ENCODE measurements at regions of chr6 and their contacts with region 1.

Region 1: GRCh38 chr6:25070547-25071366 is 135.0 kb upstream of the RIPOR2 start:
- DNase-seq: peak; percentile 85
- ATAC-seq: peak; percentile 88
- H3K4me3 ChIP-seq: peak overlapping the region; percentile 34; the same call in 1 of the 2 replicates
- H3K27ac ChIP-seq: no peak overlapping the region
- H3K4me1 ChIP-seq: peaks cover 9% of the 10 kb centered on the region; the same call in 1 of the 2 replicates
- H3K27me3 ChIP-seq: no peaks in the 10 kb centered on the region
- CTCF ChIP-seq: peak; percentile 93

Region 2: GRCh38 chr6:24774696-24775519 is 295.8 kb before region 1 on chr6 and contains the start of gene GMNN:
- CTCF ChIA-PET with region 1: no interaction called
- POLR2A ChIA-PET with region 1: no interaction called
- intact Hi-C with region 1: loop called (anchors 2 kb)
- DNase-seq: peak; percentile 95
- ATAC-seq: peak; percentile 91
- H3K4me3 ChIP-seq: peak within 1 kb of the TSS; percentile 97
- H3K27ac ChIP-seq: peak within 1 kb of the TSS; percentile 89
- H3K4me1 ChIP-seq: peaks cover 29% of the 10 kb centered on the region
- H3K27me3 ChIP-seq: no peaks in the 10 kb centered on the region
- CTCF ChIP-seq: no peak
- total RNA-seq, gene GMNN: 44.6 and 57.4 TPM in 2 replicates

Region 3: DNA sequence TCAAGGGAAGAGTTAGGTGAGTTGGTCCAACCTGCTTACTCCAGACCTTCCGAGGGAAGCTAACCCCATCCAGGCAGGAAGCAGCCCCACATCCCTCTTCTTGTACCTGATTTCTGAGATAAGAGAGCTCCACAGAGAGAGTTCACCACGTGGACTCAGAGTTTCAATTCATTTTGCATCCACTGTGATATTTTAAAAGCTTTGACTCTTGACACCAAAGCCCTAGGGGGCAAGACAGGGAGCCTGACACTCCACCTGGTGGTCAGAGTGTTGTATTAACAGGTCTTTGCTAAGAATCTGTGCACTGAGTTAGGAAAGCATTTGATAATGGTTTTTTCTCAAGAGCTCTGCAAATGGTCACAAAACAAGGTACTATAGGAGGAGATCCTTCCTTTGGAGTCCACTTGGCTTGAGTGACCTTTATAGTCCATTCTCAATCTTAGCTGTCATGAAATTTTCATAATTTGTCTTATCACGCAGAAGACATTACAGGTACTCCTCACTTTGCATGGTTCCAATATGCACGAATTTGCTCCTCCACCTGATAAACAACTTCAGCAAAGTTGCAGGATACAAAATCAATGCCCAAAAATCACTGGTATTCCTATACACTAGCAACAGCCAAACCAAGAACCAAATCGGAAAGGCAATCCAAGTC is 78.8 kb before region 1 on chr6:
- CTCF ChIA-PET with region 1: no interaction called
- POLR2A ChIA-PET with region 1: no interaction called
- intact Hi-C with region 1: loop called (anchors 2 kb)
- DNase-seq: peak; percentile 72
- ATAC-seq: peak; percentile 68
- H3K4me3 ChIP-seq: no peak overlapping the region
- H3K27ac ChIP-seq: no peak overlapping the region
- H3K4me1 ChIP-seq: peaks cover 10% of the 10 kb centered on the region
- H3K27me3 ChIP-seq: no peaks in the 10 kb centered on the region
- CTCF ChIP-seq: peak; percentile 92

Region 4: GRCh38 chr6:25173951-25174474 is 103.3 kb after region 1 on chr6:
- CTCF ChIA-PET with region 1: no interaction called
- POLR2A ChIA-PET with region 1: no interaction called
- intact Hi-C with region 1: loop called (anchors 5 kb)
- DNase-seq: peak; percentile 96
- ATAC-seq: peak; percentile 84
- H3K4me3 ChIP-seq: no peak overlapping the region
- H3K27ac ChIP-seq: peak overlapping the region; percentile 81
- H3K4me1 ChIP-seq: peaks cover 57% of the 10 kb centered on the region
- H3K27me3 ChIP-seq: no peaks in the 10 kb centered on the region
- CTCF ChIP-seq: no peak

Region 5: DNA sequence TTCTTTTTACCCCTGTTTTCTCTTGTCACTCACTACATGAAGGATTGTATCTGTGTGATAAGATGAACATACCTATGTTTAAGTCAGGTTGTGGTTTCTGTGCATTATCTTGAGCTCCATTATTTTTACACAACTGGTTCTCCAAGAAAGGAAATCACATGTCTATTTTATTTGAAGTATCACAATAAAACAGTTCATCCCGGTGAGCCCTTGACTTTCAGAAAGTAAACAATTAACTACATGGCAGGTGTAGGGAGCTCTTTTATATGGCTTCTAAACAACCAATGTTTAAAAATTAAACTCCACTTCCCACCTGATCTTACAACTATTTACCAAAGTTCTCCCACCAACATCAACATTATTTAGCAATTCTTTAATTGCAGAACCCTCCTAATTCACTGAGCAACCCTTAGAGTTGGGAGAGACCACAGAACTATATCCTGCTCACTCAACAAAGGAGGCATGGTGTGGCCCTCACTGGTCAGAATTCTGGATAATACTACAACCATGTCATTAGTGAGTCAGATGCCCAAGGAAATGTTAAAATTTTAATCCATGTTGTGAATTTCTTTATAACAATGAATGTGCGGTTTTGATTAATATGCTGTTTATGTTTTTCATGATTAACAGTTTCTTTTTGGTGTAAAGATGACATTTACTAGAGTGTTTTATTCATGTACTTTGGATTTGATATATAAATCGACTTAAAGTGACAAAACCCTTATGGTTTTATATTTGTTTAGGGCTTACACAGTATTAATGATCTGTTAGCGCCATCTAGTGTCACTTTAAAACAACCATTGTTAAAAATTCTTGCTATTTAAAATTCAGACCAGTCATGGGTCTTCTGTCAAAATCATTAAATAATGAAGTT is 531.3 kb after region 1 on chr6:
- CTCF ChIA-PET with region 1: no interaction called
- POLR2A ChIA-PET with region 1: no interaction called
- intact Hi-C with region 1: loop called (anchors 5 kb)
- DNase-seq: peak; percentile 70
- ATAC-seq: peak; percentile 81
- H3K4me3 ChIP-seq: no peak overlapping the region
- H3K27ac ChIP-seq: no peak overlapping the region
- H3K4me1 ChIP-seq: peaks cover 7% of the 10 kb centered on the region; the same call in 1 of the 2 replicates
- H3K27me3 ChIP-seq: no peaks in the 10 kb centered on the region
- CTCF ChIP-seq: peak; percentile 87